Activated B cell treated with CpG ODN at 0.5 μM for 24 hours (primary cell): ENCODE measurements at regions of chr11 and their contacts with region 1.

Region 1: DNA sequence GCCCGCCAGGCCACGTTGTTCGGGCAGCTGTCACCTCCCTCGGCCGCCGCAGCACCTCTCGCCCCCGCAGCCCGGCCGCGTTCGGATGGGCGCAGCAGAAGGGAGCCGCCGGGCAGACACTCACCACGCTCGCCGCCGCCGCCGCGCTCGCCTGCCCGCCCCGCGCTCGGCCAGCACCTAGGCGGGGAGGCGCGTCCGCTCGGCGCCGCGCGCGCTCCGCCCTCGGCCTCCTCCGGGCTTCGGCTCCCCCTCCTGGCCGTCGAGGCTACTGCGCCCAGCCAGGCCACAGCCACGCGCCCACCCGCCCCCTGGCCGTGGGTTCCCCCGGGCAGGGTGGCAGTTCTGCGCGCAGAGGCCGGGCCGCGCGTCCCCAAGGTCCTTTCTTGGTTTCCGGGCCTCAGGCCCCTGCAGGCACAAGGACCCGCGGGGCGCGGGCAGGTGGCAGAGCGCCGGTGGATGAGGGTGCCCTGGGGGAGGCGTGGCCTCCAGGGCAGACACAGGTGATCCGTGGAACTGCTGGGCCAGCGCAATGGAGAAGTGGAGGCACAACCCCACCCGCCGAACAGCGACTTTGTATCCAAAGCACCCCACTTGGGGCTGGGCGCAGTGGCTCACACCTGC is at the start of gene SLC25A22:
- DNase-seq: peak; percentile 95
- ATAC-seq: peak; percentile 77
- H3K4me3 Mint-ChIP-seq: peak within 1 kb of the TSS; percentile 93
- H3K27ac Mint-ChIP-seq: peak within 1 kb of the TSS; percentile 86
- H3K4me1 Mint-ChIP-seq: peaks cover 22% of the 10 kb centered on the region
- H3K27me3 Mint-ChIP-seq: no peaks in the 10 kb centered on the region
- CTCF ChIP-seq: peak; percentile 21
- total RNA-seq, gene SLC25A22: 30.1 and 35.4 TPM in 2 replicates

Region 2: GRCh38 chr11:560305-561147 is 237.7 kb before region 1 on chr11 and contains the starts of genes LMNTD2 and RASSF7:
- CTCF ChIA-PET with region 1: no interaction called
- POLR2A ChIA-PET with region 1: no interaction called
- intact Hi-C with region 1: loop called (anchors 1 kb)
- DNase-seq: peak; percentile 97
- ATAC-seq: peak; percentile 96
- H3K4me3 Mint-ChIP-seq: peak within 1 kb of the TSS; percentile 84
- H3K27ac Mint-ChIP-seq: peak within 1 kb of the TSS; percentile 59
- H3K4me1 Mint-ChIP-seq: peaks cover 17% of the 10 kb centered on the region
- H3K27me3 Mint-ChIP-seq: no peaks in the 10 kb centered on the region
- CTCF ChIP-seq: no peak
- total RNA-seq, gene LMNTD2: 8.6 and 9.1 TPM in 2 replicates
- total RNA-seq, gene RASSF7: 14.2 and 14.9 TPM in 2 replicates

Region 3: GRCh38 chr11:695538-696248 is 102.5 kb before region 1 on chr11 and contains the start of gene TMEM80:
- CTCF ChIA-PET with region 1: no interaction called
- POLR2A ChIA-PET with region 1: interaction called, 4 read pairs
- intact Hi-C with region 1: loop called (anchors 2 kb)
- DNase-seq: peak; percentile 95
- ATAC-seq: peak; percentile 71
- H3K4me3 Mint-ChIP-seq: peak within 1 kb of the TSS; percentile 87
- H3K27ac Mint-ChIP-seq: peak within 1 kb of the TSS; percentile 94
- H3K4me1 Mint-ChIP-seq: peaks cover 46% of the 10 kb centered on the region
- H3K27me3 Mint-ChIP-seq: no peaks in the 10 kb centered on the region
- CTCF ChIP-seq: no peak
- total RNA-seq, gene TMEM80: 34.1 and 44.4 TPM in 2 replicates

Region 4: DNA sequence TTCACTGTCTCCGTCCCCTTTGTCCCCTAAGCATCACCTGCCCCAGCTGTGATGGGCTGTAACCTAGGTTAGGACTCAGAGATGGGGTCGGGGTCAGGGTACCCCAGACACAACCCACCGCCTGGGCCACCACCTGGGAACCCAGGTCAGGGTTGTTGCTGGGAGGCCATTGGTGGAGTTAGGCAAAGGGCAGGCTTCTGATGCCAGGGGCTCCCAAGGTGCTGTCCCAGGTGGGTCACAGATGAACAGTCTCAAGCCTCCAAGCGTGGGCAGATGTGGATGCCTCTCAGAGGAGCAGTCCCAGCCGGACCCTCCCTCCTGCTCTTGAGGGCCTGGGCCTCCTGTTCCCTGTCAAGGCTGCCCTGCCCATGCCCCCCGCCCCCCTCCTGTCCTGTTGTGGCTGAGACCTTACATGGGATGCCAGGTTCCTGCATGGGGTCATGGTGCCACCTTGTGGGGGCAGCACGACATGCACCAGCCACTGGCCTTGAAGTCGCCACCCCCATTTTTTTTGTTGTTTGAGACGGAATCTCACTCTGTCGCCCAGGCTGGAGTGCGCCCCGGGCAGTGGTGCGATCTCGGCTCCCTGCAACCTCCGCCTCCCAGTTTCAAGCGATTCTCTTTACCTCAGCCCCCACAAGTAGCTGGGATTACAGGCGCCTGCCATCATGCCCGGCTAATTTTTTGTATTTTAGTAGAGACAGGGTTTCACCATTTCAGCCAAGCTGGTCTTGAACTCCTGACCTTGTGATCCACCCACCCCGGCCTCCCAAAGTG is 33.0 kb before region 1 on chr11:
- CTCF ChIA-PET with region 1: no interaction called
- POLR2A ChIA-PET with region 1: interaction called, 3 read pairs
- intact Hi-C with region 1: loop called (anchors 1 kb)
- DNase-seq: peak; percentile 55
- ATAC-seq: peak; percentile 91
- H3K4me3 Mint-ChIP-seq: no peak overlapping the region
- H3K27ac Mint-ChIP-seq: no peak overlapping the region
- H3K4me1 Mint-ChIP-seq: peaks cover 3% of the 10 kb centered on the region
- H3K27me3 Mint-ChIP-seq: no peaks in the 10 kb centered on the region
- CTCF ChIP-seq: no peak

Region 5: GRCh38 chr11:819129-819931 is 21.1 kb after region 1 on chr11:
- CTCF ChIA-PET with region 1: no interaction called
- POLR2A ChIA-PET with region 1: interaction called, 18 read pairs
- intact Hi-C with region 1: loop called (anchors 1 kb)
- DNase-seq: peak; percentile 95
- ATAC-seq: peak; percentile 85
- H3K4me3 Mint-ChIP-seq: peak overlapping the region; percentile 85
- H3K27ac Mint-ChIP-seq: no peak overlapping the region
- H3K4me1 Mint-ChIP-seq: peaks cover 14% of the 10 kb centered on the region
- H3K27me3 Mint-ChIP-seq: no peaks in the 10 kb centered on the region
- CTCF ChIP-seq: no peak